OCI-LY7 (cell line): ENCODE measurements at regions of chr4 and their contacts with region 1.

Region 1: GRCh38 chr4:109424093-109424841 is 9.3 kb upstream of the SEC24B start:
- DNase-seq: peak; percentile 37
- H3K4me3 ChIP-seq: no peak overlapping the region
- H3K27ac ChIP-seq: no peak overlapping the region
- H3K4me1 ChIP-seq: peaks cover 9% of the 10 kb centered on the region
- CTCF ChIP-seq: no peak

Region 2: GRCh38 chr4:109803924-109804571 is 379.8 kb after region 1 on chr4:
- CTCF ChIA-PET with region 1: no interaction called
- POLR2A ChIA-PET with region 1: no interaction called
- intact Hi-C with region 1: loop called (anchors 1 kb)
- DNase-seq: peak; percentile 64
- H3K4me3 ChIP-seq: no peak overlapping the region
- H3K27ac ChIP-seq: no peak overlapping the region
- H3K4me1 ChIP-seq: no peaks in the 10 kb centered on the region
- CTCF ChIP-seq: peak; percentile 76

Region 3: DNA sequence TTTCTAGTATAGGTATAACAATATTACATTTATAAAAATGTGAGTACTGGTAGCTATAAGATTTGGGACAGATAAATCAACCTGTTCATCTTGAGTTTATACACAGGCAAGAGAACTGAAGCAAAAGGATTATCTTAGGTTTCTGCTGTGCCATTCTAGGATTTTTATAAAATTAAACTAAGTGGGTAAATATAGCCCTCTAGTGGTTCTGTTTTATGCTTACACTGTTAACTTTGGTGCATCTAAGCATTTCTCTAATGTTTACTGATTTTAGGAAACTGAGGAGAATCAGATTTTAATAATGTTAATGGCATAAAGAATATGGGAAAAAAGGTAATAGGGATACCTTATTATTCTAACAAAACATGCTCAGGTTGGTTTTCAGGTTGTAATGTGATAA is 402.5 kb after region 1 on chr4:
- CTCF ChIA-PET with region 1: no interaction called
- POLR2A ChIA-PET with region 1: interaction called, 3 read pairs
- intact Hi-C with region 1: loop called (anchors 2 kb)
- DNase-seq: peak; percentile 47
- H3K4me3 ChIP-seq: no peak overlapping the region
- H3K27ac ChIP-seq: no peak overlapping the region
- H3K4me1 ChIP-seq: no peaks in the 10 kb centered on the region
- CTCF ChIP-seq: peak; percentile 87

Region 4: DNA sequence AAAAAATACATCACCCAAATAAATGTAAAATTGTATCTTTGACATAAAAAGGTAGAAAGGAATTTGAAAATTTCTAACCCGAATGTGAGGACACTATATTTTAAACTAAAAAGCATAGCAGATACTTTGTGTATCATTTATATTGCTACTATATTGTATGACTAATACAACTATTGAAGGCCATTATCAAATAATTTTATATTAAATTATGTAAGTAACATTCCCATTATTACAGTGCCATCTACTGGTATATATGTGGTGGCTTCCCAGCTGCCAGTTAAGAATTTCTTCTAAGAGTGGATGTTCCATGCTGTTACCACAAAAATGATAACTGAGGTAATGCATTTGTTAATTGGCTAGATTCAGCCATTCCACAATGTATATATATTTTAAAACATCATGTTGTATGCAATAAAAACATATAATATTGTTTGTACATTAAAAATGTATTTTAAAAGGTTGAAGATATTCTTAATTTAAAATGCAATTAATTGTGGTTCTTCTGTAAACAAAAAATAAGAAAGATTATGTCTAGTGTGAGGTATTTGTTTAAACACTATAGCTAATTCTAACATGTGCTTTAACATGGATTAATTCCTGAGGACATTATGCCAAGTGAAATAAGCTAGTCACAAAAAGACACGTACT is 553.7 kb after region 1 on chr4:
- CTCF ChIA-PET with region 1: no interaction called
- POLR2A ChIA-PET with region 1: no interaction called
- intact Hi-C with region 1: loop called (anchors 2 kb)
- DNase-seq: peak; percentile 62
- H3K4me3 ChIP-seq: no peak overlapping the region
- H3K27ac ChIP-seq: no peak overlapping the region
- H3K4me1 ChIP-seq: peaks cover 7% of the 10 kb centered on the region
- CTCF ChIP-seq: peak; percentile 89

Region 5: DNA sequence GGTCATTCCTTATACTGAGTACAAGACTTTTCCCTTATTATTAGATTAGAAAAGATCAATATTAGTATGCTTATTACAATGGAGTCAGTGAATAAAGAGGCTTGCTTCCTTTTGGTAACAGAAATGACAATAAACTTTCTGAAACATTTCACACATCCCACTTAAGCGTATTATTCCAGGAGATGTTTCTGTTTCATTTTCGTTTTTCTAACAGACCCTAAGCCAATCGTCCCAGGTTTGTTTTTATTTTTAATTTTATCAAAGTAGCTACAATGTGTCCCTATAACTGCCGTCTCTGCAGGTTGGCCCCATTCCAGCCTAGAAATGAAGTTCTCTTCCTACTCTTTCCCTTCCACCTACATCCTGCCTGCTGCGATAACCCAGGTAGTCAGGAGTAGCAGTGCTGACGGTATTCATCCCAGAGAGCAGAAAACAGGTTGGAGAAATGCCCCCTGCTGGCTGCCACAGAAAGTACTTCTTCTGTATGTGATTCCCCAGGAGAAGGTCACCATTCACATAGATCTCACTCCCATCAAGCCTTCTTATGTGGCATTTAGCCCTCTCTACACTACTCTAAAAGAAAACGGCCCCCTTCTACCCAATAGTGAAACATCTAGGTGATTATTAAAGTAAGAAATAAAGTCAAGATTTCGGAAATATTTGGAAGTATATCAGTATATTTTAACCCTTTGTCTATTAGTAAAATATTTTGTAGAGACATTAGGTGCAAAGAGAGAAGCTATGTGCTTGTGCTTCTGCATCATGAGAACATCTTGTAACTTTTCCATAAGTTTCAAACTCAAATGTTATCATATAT is 1092.0 kb after region 1 on chr4:
- CTCF ChIA-PET with region 1: no interaction called
- POLR2A ChIA-PET with region 1: no interaction called
- intact Hi-C with region 1: loop called (anchors 5 kb)
- DNase-seq: peak; percentile 78
- H3K4me3 ChIP-seq: peak overlapping the region; percentile 67
- H3K27ac ChIP-seq: no peak overlapping the region
- H3K4me1 ChIP-seq: peaks cover 8% of the 10 kb centered on the region
- CTCF ChIP-seq: peak; percentile 88